ENCODE measurements at regions of chr9 and their contacts with region 1.

Region 1: DNA sequence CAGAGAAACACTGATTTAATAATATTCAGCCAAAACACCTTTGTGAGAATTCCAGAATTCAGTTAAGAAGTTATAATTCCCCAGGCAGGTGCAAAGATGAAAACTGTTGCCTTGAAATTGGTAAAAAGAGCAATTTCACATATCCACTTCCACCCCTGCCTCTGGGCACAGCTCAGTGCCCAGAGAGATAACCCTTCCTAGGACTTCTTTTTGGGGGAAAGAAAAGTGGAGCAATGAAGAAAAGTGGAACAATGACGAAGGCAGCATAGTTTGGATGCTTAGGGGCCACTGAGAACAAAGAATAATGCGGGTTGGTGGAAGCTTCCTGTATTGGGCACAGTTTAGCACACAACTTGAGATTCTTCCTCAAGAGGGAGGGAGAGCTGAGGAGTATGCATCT is 242.1 kb upstream of the TUSC1 start:
- DNase-seq: no peak
- H3K4me3 Mint-ChIP-seq: no peak overlapping the region
- H3K27ac Mint-ChIP-seq: no peak overlapping the region
- H3K4me1 Mint-ChIP-seq: no peaks in the 10 kb centered on the region
- H3K27me3 Mint-ChIP-seq: no peaks in the 10 kb centered on the region

Region 2: DNA sequence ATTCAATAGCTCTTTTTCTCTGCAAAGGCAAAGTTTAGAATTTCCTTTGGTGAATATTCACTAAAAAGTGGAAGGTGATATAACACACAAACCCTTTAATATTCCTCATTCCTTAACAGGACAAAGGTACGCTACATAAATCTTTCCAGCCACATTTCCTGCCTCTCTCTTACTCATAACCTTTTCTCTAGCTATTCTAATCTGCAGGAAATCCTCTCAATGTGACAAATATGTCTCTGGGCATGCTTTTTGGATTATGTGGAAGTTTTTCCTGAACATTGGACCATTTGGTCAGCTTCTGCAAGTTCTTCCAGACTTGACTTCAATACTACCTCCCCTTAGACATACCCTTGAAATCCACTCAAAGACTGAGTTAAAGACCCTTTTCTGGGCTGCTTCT is 55.8 kb before region 1 on chr9:
- intact Hi-C with region 1: loop called (anchors 10 kb)
- DNase-seq: no peak
- H3K4me3 Mint-ChIP-seq: no peak overlapping the region
- H3K27ac Mint-ChIP-seq: no peak overlapping the region
- H3K4me1 Mint-ChIP-seq: no peaks in the 10 kb centered on the region
- H3K27me3 Mint-ChIP-seq: no peaks in the 10 kb centered on the region

Region 3: GRCh38 chr9:25876248-25876647 is 44.1 kb before region 1 on chr9:
- intact Hi-C with region 1: no loop called
- DNase-seq: no peak
- H3K4me3 Mint-ChIP-seq: no peak overlapping the region
- H3K27ac Mint-ChIP-seq: no peak overlapping the region
- H3K4me1 Mint-ChIP-seq: no peaks in the 10 kb centered on the region
- H3K27me3 Mint-ChIP-seq: no peaks in the 10 kb centered on the region